Heart right ventricle (tissue), 16 donors: ENCODE measurements at regions of chr17 and their contacts with region 1.

Region 1: GRCh38 chr17:65947831-65948230 is 244.1 kb downstream of the CEP112 start:
- DNase-seq: no peak
- ATAC-seq: no peak
- H3K4me3 ChIP-seq: no peak overlapping the region
- H3K27ac ChIP-seq: no peak overlapping the region
- H3K4me1 ChIP-seq: no peaks in the 10 kb centered on the region
- H3K27me3 ChIP-seq: no peaks in the 10 kb centered on the region
- CTCF ChIP-seq: no peak

Region 2: DNA sequence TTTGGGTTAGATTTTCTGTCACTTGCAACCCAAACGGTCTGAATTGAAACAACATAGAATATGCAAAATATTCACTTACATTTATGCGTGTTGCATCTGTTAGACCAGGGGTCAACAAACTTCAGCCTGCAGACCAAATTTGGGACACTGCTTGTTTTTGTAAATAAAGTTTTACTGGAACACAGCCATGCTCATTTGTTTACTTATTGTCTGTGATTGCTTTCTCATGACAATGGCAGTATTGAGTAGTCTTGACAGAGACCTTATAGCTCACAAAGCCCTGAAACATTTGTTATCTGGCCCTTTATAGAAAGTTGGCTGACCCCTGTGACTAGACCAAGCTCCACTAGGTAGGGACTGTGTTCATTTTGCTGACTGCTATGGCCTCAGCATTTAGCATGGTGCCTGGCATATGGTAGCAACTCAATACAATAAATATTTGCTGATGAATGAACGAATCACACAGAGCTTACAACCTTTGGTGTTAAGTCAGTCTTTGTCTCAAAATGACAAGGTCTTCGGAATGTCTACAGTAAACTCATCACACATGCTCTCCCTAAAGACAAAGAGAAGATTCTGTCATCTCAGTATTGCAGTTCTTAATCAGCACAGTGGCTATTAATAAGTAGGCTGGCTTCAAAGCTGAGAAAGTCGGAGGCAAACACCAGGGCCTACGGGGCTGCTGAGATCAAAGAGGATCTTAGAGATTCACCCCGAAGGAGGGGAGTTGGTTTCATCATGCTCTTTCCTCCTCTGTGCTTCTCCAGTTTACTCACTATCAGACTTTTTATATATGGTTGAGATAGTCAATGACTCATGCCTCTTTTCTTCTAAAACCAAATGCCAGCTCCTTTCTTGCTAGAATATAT is 291.2 kb before region 1 on chr17:
- intact Hi-C with region 1: no loop called
- DNase-seq: no peak
- ATAC-seq: no peak
- H3K4me3 ChIP-seq: no peak overlapping the region
- H3K27ac ChIP-seq: no peak overlapping the region
- H3K4me1 ChIP-seq: no peaks in the 10 kb centered on the region
- H3K27me3 ChIP-seq: no peaks in the 10 kb centered on the region
- CTCF ChIP-seq: no peak

Region 3: DNA sequence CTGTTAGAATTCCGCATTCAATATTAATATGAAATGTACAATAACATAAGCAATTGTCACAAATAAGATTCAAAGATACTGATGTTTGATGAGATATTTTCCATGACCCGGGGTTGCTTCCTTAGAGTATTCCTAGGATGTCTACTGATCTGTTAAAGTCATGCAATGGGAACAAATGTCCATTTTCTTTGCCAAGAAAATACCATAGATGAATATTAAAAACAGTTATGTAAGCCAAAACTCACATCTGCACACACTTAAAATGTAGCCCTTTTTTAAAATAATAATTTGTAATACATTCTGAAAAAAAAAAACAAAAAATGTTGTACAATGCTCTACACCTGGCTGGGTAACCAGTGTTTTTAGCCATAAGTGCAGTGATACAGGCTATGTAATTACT is 127.0 kb before region 1 on chr17:
- intact Hi-C with region 1: no loop called
- DNase-seq: no peak
- ATAC-seq: no peak
- H3K4me3 ChIP-seq: no peak overlapping the region
- H3K27ac ChIP-seq: no peak overlapping the region
- H3K4me1 ChIP-seq: peaks cover 0 to 5% (median 0%) of the 10 kb centered on the region in 9 donors
- H3K27me3 ChIP-seq: no peaks in the 10 kb centered on the region
- CTCF ChIP-seq: no peak

Region 4: GRCh38 chr17:65966072-65966695 is 18.4 kb after region 1 on chr17:
- intact Hi-C with region 1: loop called in 1 of 10 experiments (anchors 2 kb)
- DNase-seq: no peak
- ATAC-seq: no peak
- H3K4me3 ChIP-seq: no peak overlapping the region
- H3K27ac ChIP-seq: no peak overlapping the region
- H3K4me1 ChIP-seq: no peaks in the 10 kb centered on the region
- H3K27me3 ChIP-seq: no peaks in the 10 kb centered on the region
- CTCF ChIP-seq: no peak

Region 5: DNA sequence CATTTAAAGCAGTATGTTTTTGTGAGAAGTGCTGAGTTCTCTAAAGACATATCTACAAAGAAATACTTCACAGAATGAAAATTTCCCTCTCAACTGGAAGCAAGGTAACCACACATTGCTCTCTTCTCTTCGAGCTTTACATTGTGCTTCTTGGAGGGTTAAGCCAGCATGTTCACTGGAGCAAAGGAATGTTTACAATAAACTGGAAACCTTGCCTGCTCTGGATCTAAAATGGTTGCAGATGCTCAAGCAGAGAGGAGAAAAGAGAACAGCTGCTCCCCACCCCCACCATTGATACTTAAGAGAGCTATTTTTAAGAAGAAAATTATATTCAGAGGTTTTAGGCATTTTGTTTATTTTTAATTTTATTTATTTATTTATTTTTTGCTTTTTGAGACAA is 31.0 kb after region 1 on chr17:
- intact Hi-C with region 1: no loop called
- DNase-seq: no peak
- ATAC-seq: no peak
- H3K4me3 ChIP-seq: no peak overlapping the region
- H3K27ac ChIP-seq: no peak overlapping the region
- H3K4me1 ChIP-seq: no peaks in the 10 kb centered on the region
- H3K27me3 ChIP-seq: no peaks in the 10 kb centered on the region
- CTCF ChIP-seq: no peak

Region 6: GRCh38 chr17:65990593-65990992 is 42.8 kb after region 1 on chr17:
- intact Hi-C with region 1: no loop called
- DNase-seq: peak; percentile 61 to 62
- ATAC-seq: peak; percentile 74 to 100 (median 94)
- H3K4me3 ChIP-seq: no peak overlapping the region
- H3K27ac ChIP-seq: no peak overlapping the region
- H3K4me1 ChIP-seq: no peaks in the 10 kb centered on the region
- H3K27me3 ChIP-seq: no peaks in the 10 kb centered on the region
- CTCF ChIP-seq: no peak